K562 (cell line): ENCODE measurements at regions of chr1 and their contacts with region 1.

Region 1: DNA sequence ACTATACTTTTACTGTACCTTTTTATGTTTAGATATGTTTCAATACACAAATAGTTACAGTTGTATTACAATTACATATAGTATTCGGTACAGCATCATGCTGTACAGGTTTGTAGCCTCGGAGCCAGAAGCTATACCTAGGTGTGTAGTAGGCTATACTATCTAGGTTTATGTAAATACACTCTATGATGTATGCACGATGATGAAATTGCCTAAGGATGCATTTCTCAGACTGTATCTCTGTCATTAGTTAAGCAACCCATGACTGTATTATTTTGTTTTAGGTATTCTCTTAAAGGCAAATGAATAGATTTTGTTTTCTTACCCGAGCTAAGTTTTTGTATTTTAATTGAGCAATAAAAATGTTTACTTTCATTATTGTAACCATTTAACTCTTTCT is 56.4 kb downstream of the SPATA17 start:
- DNase-seq: no peak
- ATAC-seq: no peak
- H3K4me3 ChIP-seq: no peak overlapping the region
- H3K27ac ChIP-seq: no peak overlapping the region
- H3K4me1 ChIP-seq: no peaks in the 10 kb centered on the region
- H3K27me3 ChIP-seq: no peaks in the 10 kb centered on the region
- CTCF ChIP-seq: no peak
- EP300 ChIP-seq: no peak
- POLR2A ChIP-seq: no peak
- RAD21 ChIP-seq: no peak

Region 2: GRCh38 chr1:215739025-215739424 is 1948.5 kb before region 1 on chr1:
- CTCF ChIA-PET with region 1: no interaction called
- POLR2A ChIA-PET with region 1: no interaction called
- in situ Hi-C with region 1: no loop called
- intact Hi-C with region 1: loop called (anchors 5 kb)
- DNase-seq: no peak
- ATAC-seq: no peak
- H3K4me3 ChIP-seq: no peak overlapping the region
- H3K27ac ChIP-seq: no peak overlapping the region
- H3K4me1 ChIP-seq: no peaks in the 10 kb centered on the region
- H3K27me3 ChIP-seq: no peaks in the 10 kb centered on the region
- CTCF ChIP-seq: no peak
- EP300 ChIP-seq: no peak
- POLR2A ChIP-seq: no peak
- RAD21 ChIP-seq: no peak